Activated naive CD4-positive, alpha-beta T cell treated with anti-CD3 and anti-CD28 coated beads for 36 hours (primary cell): ENCODE measurements at regions of chr1 and their contacts with region 1.

Region 1: DNA sequence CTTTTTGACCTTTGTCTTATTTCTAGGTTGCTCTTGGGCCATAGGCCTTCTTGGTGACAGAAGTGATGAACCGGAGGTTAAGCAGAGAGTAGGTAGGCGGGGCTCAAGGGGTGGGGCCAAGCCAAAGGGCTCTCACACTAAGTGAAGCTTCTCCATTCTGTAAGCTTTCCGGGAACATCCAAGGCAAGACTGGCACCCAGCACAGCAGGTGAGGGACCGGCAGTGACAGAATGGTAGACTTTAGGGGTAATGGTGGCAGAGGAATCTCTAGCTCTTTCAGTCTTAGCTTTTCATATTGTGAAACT is at the start of gene TNFAIP8L2:
- DNase-seq: peak; percentile 93
- H3K4me3 Mint-ChIP-seq: peak within 1 kb of the TSS; percentile 97
- H3K27ac Mint-ChIP-seq: peak within 1 kb of the TSS; percentile 98
- H3K4me1 Mint-ChIP-seq: peaks cover 40% of the 10 kb centered on the region
- H3K27me3 Mint-ChIP-seq: no peaks in the 10 kb centered on the region
- total RNA-seq, gene TNFAIP8L2: 9.6 to 10.5 TPM

Region 2: DNA sequence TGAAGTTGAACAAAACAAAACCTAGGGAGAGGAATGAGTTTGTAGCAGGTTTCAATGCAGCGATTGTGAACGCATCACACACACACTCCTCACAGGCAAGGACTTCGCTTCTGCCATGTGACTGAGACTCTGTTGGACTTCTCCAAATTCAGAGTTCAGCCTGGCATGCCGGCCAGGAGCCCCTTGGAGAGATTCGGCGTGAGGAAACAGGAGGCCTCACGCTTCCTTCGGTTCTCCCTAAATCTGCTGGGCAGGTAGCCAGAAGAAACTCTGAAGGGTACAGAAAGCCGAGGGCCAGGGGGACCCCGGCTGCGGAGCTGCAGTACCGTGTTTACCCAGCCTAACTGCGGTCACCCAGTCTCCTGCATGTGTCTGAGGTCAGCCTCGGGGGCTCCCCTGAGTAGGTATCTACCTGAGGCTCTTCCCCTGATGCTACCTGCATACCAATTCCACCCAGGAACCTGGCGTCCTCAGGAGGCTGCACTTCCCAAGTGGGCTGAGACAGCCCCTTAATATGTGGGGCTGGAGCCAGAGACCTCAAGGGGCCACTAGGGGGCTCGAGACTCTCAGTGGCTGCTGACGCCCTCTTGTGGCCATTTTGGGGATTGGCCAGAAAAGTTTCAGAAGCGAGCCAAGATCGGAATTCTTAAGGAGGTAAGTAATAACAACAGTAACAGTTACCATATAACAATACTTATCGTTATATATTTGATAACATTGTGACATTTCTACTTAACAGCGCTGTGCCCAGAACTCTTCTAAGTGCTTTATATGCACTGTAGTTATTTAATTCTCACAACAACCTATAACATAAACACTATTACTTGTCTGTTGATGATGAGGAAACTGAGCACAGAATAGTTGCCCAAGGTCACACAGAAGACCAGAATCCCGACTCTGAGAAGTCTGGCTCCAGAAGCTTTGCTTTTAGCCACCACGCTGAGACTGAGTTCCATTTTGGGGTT is 177.1 kb before region 1 on chr1:
- CTCF ChIA-PET with region 1: interaction called, 3 read pairs
- intact Hi-C with region 1: loop called (anchors 2 kb)
- DNase-seq: peak; percentile 94
- H3K4me3 Mint-ChIP-seq: peak overlapping the region; percentile 43
- H3K27ac Mint-ChIP-seq: peak overlapping the region; percentile 53
- H3K4me1 Mint-ChIP-seq: peaks cover 39% of the 10 kb centered on the region
- H3K27me3 Mint-ChIP-seq: no peaks in the 10 kb centered on the region

Region 3: DNA sequence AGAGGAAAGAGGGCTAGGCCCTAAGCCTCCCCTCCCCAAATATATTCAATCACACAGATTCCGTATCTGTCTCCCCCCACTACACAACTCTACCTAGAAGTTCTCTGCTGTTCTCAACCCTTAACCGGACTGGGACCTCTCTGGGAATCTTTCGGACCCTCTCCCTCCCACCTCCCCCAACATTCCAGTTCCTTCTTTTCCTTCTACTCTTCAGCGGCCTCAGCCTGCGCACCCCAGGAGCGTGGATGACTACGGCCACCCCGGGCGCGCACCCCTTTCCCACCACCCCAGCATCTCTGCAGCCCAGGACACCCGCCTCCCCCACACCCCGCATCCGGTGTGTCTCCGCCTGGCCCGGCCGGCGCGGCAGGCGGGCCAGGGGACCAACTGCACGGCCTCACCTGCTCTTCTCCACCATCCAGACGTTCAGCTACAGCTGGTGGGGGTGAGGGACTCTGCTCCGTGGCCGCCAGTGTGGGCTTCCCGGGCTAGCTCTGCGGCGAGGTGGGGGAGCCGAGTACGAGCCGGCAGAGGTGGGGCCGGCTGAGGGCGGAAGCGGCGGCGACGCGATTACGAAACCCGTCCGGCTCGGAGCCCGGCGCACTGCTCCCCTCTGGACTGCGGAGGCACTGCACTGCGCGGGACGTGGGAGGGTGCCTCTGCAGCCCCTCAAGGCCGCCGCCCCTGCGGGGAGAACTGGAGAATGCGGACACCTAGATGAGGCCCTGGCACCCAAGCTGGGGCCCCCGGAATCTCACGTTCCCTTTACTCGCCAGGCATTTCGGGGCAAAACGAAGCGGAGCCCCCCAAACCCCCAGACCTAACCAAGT is 97.2 kb before region 1 on chr1 and contains the start of gene CDC42SE1:
- CTCF ChIA-PET with region 1: interaction called, 4 read pairs
- intact Hi-C with region 1: loop called (anchors 1 kb)
- DNase-seq: peak; percentile 86
- H3K4me3 Mint-ChIP-seq: peak within 1 kb of the TSS; percentile 86
- H3K27ac Mint-ChIP-seq: peak within 1 kb of the TSS; percentile 98
- H3K4me1 Mint-ChIP-seq: peaks cover 53% of the 10 kb centered on the region
- H3K27me3 Mint-ChIP-seq: no peaks in the 10 kb centered on the region
- total RNA-seq, gene CDC42SE1: 98.1 to 99.0 TPM

Region 4: GRCh38 chr1:151098126-151098525 is 58.3 kb before region 1 on chr1:
- CTCF ChIA-PET with region 1: interaction called, 255 read pairs
- intact Hi-C with region 1: loop called (anchors 1 kb)
- DNase-seq: no peak
- H3K4me3 Mint-ChIP-seq: no peak overlapping the region
- H3K27ac Mint-ChIP-seq: no peak overlapping the region
- H3K4me1 Mint-ChIP-seq: no peaks in the 10 kb centered on the region
- H3K27me3 Mint-ChIP-seq: no peaks in the 10 kb centered on the region

Region 5: DNA sequence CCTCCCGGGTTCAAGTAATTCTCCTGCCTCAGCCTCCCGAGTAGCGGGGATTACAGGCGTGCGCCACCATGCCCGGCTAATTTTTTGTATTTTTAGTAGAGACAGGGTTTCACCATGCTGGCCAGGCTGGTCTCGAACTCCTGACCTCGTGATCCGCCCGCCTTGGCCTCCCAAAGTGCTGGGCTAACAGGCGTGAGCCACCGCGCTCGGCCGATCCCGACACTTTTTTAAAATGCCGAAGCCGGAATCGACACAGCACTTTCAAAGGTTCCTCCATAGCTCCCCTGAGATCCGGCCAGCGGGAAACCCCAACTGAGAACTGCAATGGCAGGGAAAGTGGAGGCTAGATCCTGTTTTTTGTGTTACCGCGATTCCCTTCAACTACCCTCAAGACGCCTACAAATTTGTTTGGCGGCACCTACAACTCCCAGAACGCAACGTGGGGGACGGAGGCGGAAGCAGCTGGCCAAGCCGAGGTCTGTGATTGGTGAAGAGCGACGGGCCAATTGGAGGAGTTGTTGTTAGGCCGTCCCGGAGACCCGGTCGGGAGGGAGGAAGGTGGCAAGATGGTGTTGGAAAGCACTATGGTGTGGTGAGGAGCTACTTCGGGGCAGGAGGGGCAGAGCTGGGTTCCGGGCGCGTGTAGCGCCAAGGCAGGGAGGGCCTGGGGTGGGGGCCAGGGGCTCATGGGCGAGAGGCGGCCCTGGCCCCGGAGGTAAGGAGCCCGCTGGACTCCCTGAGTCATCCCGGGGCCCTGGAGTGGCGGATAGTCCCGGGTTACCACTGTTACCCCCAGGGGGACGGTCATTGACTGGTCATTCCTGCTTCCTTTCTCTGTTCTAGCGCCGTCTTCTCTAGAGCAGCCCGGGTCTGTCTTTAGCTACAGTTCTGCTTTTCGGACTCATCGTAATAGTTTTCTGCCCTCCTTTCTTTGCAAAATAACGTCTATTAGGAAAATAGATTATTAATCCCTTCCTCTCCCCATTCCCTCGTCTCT is 98.0 kb after region 1 on chr1 and contains the start of gene PSMD4:
- CTCF ChIA-PET with region 1: interaction called, 6 read pairs
- intact Hi-C with region 1: loop called (anchors 1 kb)
- DNase-seq: peak; percentile 97
- H3K4me3 Mint-ChIP-seq: peak within 1 kb of the TSS; percentile 95
- H3K27ac Mint-ChIP-seq: peak within 1 kb of the TSS; percentile 92
- H3K4me1 Mint-ChIP-seq: peaks cover 31% of the 10 kb centered on the region
- H3K27me3 Mint-ChIP-seq: peaks cover 2% of the 10 kb centered on the region
- total RNA-seq, gene PSMD4: 167 to 192 TPM